ENCODE measurements at regions of chr6 and their contacts with region 1.

Region 1: DNA sequence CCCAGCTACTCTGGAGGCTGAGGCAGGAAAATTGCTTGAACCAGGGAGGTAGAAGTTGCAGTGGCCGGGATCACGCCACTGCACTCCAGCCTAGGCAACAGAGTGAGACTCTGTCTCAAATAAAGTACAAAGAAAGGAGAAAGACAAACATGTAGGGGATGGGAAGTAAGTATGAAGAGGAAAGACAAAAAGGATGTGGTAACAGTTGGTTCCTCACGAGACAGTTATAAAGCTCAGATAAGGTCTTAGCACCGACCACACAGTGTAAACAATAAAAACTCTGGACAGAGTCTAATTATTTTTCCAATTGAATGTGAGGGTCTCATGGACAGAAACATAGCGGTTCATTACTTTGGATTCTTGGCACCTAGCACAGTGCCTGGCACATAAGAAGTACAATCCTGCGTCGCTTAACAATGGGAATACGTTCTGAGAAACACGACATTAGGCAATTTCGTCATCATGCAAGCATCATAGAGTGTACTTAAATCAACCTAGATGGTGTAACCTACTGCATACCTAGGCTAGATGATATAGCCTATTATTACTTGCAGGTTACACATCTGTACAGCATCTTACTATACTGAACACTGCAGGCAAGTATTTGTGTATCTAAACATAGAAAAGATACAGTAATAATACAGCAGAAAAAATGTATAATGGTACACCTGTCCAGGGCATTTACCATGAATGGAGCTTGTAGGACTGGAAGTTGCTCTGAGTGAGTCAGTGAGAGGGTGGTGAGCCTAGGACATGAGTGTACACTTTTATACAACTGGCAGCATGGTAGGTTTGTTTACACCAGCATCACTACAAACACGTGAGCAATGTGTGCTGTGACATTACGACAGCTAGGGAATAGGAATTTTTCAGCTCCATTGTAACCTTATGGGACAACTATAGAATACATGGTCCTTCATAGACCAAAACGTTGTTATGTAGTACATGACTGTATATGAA is 38.2 kb downstream of the MBOAT1 start:
- DNase-seq: no peak
- H3K4me3 ChIP-seq: no peak overlapping the region
- H3K27ac ChIP-seq: no peak overlapping the region
- H3K4me1 ChIP-seq: peaks cover 0 to 3% of the 10 kb centered on the region in 2 donors
- H3K27me3 ChIP-seq: no peaks in the 10 kb centered on the region
- CTCF ChIP-seq: no peak
- POLR2A ChIP-seq: no peak

Region 2: DNA sequence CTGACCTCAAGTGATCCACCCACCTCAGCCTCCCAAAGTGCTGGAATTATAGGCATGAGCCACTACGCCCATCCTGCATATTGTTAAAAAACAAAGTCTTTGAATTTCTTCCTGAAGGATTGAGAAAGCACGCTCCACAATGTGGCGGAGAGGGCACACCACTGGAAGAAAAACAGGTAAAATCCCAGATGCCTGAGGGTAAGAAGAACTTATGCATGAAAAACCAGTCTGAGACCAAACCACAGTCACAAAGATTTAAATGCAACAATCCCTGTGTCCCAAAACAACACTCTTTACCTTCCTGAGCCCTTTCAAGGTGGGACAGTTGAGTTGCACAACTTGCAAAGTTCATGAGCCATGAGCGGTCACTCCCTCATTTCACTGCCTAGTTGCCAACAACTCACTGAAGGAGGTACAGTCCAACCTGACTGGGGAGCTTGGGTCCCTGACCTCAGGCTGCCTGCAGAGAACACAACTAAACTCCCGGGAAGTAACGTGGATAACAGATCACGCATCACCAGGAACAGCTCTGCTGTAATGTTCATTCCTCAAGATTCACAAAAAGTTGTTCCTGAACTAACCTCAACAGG is 31.3 kb before region 1 on chr6:
- intact Hi-C with region 1: loop called (anchors 1 kb)
- DNase-seq: no peak
- H3K4me3 ChIP-seq: no peak overlapping the region
- H3K27ac ChIP-seq: no peak overlapping the region
- H3K4me1 ChIP-seq: no peaks in the 10 kb centered on the region
- H3K27me3 ChIP-seq: no peaks in the 10 kb centered on the region
- CTCF ChIP-seq: no peak
- POLR2A ChIP-seq: no peak

Region 3: DNA sequence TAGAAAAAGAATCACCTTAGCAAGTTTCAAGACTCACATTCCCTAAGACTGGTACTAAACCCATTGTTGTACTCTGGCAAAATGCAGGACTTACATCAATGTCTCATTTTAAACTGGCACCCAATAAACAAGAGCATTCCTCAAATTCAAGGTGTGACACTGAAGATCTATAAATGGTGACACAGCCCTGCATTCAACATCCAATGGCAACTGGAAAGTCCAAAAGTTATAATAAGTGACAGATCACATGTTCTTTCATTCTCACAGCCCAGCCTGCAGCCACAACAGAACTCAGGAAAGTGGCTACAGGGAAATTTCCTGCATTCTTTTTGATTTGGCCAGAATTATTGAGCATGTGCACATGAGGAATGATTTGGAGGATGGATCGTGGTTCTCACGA is 19.4 kb before region 1 on chr6:
- intact Hi-C with region 1: loop called (anchors 1 kb)
- DNase-seq: no peak
- H3K4me3 ChIP-seq: no peak overlapping the region
- H3K27ac ChIP-seq: no peak overlapping the region
- H3K4me1 ChIP-seq: peaks cover 0 to 3% of the 10 kb centered on the region in 2 donors
- H3K27me3 ChIP-seq: no peaks in the 10 kb centered on the region
- CTCF ChIP-seq: no peak
- POLR2A ChIP-seq: no peak

Measured in breast epithelium (tissue), 4 donors.